Cardiac septum (tissue), 1 donor: ENCODE measurements at regions of chr6 and their contacts with region 1.

Region 1: DNA sequence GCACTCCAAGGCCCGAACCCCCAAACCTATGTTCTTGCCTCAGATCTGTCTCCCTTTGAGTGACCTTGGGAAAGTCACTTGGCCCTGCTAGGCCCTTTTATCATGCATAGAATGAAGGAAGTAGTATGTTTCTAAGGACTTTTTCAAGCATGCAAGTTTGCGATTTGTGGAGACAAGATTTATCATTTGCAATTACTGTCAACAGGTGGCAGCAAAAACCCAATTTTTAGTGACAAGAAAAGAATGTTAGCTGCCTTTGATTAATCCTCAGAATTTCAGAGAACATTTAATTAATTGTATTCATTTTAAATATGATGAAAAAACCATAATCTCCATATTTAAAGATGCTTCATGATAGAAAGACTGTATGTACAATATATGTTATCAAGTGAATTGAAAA is 28.3 kb upstream of the PREP start:
- DNase-seq: no peak

Region 2: DNA sequence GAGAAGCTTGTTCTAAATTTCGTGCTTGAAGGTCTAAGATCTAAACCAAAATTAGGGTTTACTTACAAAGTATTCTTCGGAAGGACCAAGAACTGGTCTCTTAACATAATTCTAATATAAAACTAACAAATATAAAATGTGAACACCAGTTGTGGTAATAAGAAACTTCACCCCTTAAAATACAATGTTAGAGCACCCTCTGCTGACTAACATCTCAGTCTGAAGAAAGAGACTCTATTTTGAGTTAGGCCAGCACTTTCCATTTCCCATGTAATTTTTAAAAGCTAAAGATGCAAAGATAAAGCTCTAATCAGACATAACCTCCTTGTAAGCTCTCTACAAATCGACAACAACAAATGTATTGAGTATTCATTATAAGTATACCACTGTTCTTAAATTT is 869.7 kb after region 1 on chr6:
- intact Hi-C with region 1: loop called (anchors 5 kb)
- DNase-seq: no peak